ENCODE measurements at regions of chr16 and their contacts with region 1.

Region 1: DNA sequence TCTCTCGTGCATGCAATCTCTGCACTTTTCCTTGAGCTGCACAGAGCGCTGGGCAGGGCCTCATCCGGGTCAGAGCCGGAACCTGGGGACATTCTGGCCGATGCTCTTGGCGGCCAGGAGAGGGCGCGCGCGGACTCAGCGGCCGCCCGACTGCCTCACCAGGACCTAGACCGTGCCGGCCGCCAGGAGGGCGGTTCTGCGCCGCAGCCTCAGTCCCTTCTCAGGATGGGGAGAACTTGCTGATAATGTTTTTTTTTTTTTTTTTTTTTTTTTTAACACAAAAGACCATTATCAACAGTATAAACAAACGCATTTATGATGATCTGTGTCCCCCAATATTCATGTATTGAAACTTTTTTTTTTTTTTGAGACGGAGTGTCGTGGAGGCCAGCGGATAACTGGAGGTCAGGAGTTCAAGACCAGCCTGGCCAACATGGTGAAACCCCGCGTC is 8.1 kb upstream of the FLYWCH2 start:
- DNase-seq: peak; percentile 90
- H3K4me3 Mint-ChIP-seq: no peak overlapping the region
- H3K27ac Mint-ChIP-seq: no peak overlapping the region
- H3K4me1 Mint-ChIP-seq: no peaks in the 10 kb centered on the region
- H3K27me3 Mint-ChIP-seq: peaks cover 4% of the 10 kb centered on the region

Region 2: DNA sequence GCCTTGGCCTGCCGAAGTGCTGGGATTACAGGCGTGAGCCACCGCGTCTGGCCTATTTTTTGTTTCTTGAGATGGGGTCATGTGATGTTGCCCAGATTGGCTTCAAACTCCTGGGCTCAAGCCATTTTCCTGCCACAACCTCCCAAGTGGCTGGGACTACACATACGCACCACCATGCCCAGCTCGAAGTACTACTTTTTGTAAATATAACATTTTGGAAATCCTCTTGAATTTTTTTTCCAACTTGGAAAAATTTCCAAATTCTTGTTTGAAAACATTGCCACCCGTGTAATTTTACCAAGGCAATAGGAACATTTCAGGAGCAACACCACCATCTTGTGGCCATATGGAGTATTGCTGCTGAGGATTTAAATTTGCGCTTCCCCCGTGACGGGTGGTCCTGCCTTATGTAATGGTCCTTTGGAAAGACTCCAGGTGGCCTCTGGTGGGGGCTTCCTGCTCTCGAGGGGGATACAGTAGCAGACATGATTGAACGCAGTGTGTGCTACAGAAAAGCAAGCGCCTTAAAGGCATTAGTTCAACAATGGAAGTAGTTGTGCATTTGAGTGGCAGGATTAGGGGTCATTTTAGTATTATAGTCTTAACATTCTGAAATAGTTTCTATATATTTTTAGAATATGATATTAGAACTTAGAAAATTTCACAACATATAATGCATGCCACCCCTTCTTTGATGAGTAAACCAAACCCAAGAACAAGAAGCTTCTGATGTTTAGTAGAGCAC is 44.7 kb after region 1 on chr16:
- intact Hi-C with region 1: loop called (anchors 1 kb)
- DNase-seq: peak; percentile 91
- H3K4me3 Mint-ChIP-seq: no peak overlapping the region
- H3K27ac Mint-ChIP-seq: peak overlapping the region; percentile 38
- H3K4me1 Mint-ChIP-seq: peaks cover 8% of the 10 kb centered on the region
- H3K27me3 Mint-ChIP-seq: no peaks in the 10 kb centered on the region

Region 3: GRCh38 chr16:2926650-2927646 is 52.0 kb after region 1 on chr16:
- intact Hi-C with region 1: loop called (anchors 2 kb)
- DNase-seq: peak; percentile 97
- H3K4me3 Mint-ChIP-seq: no peak overlapping the region
- H3K27ac Mint-ChIP-seq: no peak overlapping the region
- H3K4me1 Mint-ChIP-seq: peaks cover 16% of the 10 kb centered on the region
- H3K27me3 Mint-ChIP-seq: no peaks in the 10 kb centered on the region

Measured in activated CD4-positive, alpha-beta T cell treated with anti-CD3 and anti-CD28 coated beads, Interleukin-2, amount 10 ng/mL, durations not matched to agents 24 days and 14 days (primary cell).